ENCODE measurements at regions of chr5 and their contacts with region 1.

Region 1: DNA sequence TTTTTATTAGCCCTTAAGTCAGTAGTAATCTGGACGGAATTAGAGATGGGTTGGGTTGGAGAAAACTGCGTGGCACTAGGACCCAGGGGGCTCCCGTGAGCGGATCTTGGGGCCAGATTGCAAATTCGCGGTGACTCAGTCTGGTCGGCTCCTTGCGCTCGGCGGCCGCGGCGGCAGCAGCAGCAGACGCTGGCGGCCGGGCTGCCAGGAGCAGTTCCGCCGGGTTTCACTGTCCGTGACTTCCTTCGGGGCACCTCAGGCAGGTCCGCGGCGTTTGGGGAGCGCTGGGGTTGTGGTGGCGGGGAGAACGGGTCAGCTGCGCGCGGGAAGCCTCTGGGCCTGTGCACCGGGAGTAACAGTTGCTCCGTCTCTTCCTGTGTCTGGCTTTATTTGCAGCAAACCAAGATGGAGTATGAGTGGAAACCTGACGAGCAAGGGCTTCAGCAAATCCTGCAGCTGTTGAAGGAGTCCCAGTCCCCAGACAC is 31.6 kb downstream of the TNPO1 start:
- DNase-seq: peak; percentile 80
- H3K4me3 Mint-ChIP-seq: peak overlapping the region; percentile 96
- H3K27ac Mint-ChIP-seq: peak overlapping the region; percentile 99
- H3K4me1 Mint-ChIP-seq: peaks cover 44% of the 10 kb centered on the region
- H3K27me3 Mint-ChIP-seq: peaks cover 7% of the 10 kb centered on the region

Region 2: DNA sequence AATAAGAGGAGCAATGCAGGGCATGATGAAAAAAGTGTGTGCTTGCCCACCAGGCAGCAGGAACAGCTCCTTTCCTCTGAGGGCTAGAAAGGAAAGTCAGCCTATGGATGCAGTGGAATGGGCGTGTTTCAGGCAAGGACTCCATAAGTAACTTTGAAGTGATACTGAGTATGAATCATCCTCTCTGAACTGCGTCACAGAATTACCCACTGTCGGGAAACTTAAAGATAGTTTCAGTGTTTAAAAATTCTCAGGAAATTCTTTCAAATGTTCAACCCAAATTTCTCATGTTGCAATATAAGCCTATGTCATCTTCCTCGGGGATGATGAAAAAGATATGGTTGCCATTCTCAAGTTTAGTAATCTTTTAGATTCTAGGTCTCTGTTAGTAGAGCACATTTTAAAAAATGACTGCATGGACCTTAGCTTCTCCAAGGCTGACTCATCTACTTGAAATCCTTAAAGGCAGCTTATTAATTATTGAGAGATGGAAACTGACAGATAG is 500.2 kb before region 1 on chr5:
- intact Hi-C with region 1: loop called (anchors 2 kb)
- DNase-seq: no peak
- H3K4me3 Mint-ChIP-seq: no peak overlapping the region
- H3K27ac Mint-ChIP-seq: peak overlapping the region; percentile 44
- H3K4me1 Mint-ChIP-seq: peaks cover 28% of the 10 kb centered on the region
- H3K27me3 Mint-ChIP-seq: no peaks in the 10 kb centered on the region

Region 3: GRCh38 chr5:72860499-72860898 is 12.5 kb after region 1 on chr5:
- intact Hi-C with region 1: loop called (anchors 1 kb)
- DNase-seq: no peak
- H3K4me3 Mint-ChIP-seq: no peak overlapping the region
- H3K27ac Mint-ChIP-seq: peak overlapping the region; percentile 44
- H3K4me1 Mint-ChIP-seq: peaks cover 26% of the 10 kb centered on the region
- H3K27me3 Mint-ChIP-seq: no peaks in the 10 kb centered on the region

Region 4: GRCh38 chr5:72895758-72896157 is 47.7 kb after region 1 on chr5:
- intact Hi-C with region 1: loop called (anchors 2 kb)
- DNase-seq: no peak
- H3K4me3 Mint-ChIP-seq: no peak overlapping the region
- H3K27ac Mint-ChIP-seq: peak overlapping the region; percentile 77
- H3K4me1 Mint-ChIP-seq: peaks cover 17% of the 10 kb centered on the region
- H3K27me3 Mint-ChIP-seq: no peaks in the 10 kb centered on the region

Measured in activated T-helper 1 cell treated with anti-CD3 and anti-CD28 coated beads, Interleukin-12 subunit alpha, Interleukin-12 subunit beta, Interleukin-2, Interleukin-4 antibody, amounts not matched to agents 30 ng/mL and 10 ng/mL and 1 ng/mL, durations not matched to agents 14 hours and 24 hours and 36 hours (primary cell).